ENCODE measurements at regions of chr10 and their contacts with region 1.

Region 1: GRCh38 chr10:22316285-22317120 is at the start of gene COMMD3:
- DNase-seq: peak; percentile 40
- ATAC-seq: peak; percentile 83
- H3K4me3 ChIP-seq: peak within 1 kb of the TSS; percentile 95
- H3K27ac ChIP-seq: peak within 1 kb of the TSS; percentile 89
- H3K4me1 ChIP-seq: peaks cover 18% of the 10 kb centered on the region
- H3K27me3 ChIP-seq: no peaks in the 10 kb centered on the region
- CTCF ChIP-seq: no peak
- EP300 ChIP-seq: no peak
- POLR2A ChIP-seq: peak; percentile 94
- RAD21 ChIP-seq: no peak
- polyA plus RNA-seq, gene COMMD3: 238 to 248 TPM

Region 2: GRCh38 chr10:21495752-21496342 is 820.7 kb before region 1 on chr10:
- CTCF ChIA-PET with region 1: no interaction called
- POLR2A ChIA-PET with region 1: no interaction called
- RAD21 ChIA-PET with region 1: no interaction called
- SMC1A ChIA-PET with region 1: no interaction called
- in situ Hi-C with region 1: no loop called
- intact Hi-C with region 1: loop called (anchors 10 kb)
- DNase-seq: peak; percentile 34
- ATAC-seq: peak; percentile 89
- H3K4me3 ChIP-seq: peak overlapping the region; percentile 65
- H3K27ac ChIP-seq: peak overlapping the region; percentile 35; the same call in 1 of the 2 replicates
- H3K4me1 ChIP-seq: peaks cover 20% of the 10 kb centered on the region
- H3K27me3 ChIP-seq: peaks cover 5 to 18% of the 10 kb centered on the region in 2 experiments
- CTCF ChIP-seq: peak; percentile 84 to 97 (median 89); a peak in 5 of 6 replicates
- EP300 ChIP-seq: 0 out of 4 replicates have a peak, but pooled peaks of 1 of the 2 experiments have one; percentile 34
- POLR2A ChIP-seq: peak; percentile 61
- RAD21 ChIP-seq: peak; percentile 85

Region 3: GRCh38 chr10:22003079-22003913 is 313.2 kb before region 1 on chr10 and contains the start of gene DNAJC1:
- CTCF ChIA-PET with region 1: interaction called, 4 read pairs
- POLR2A ChIA-PET with region 1: interaction called, 10 read pairs
- RAD21 ChIA-PET with region 1: no interaction called
- SMC1A ChIA-PET with region 1: interaction called, 3 read pairs
- in situ Hi-C with region 1: loop called (anchors 5 kb)
- intact Hi-C with region 1: loop called (anchors 5 kb)
- DNase-seq: peak; percentile 83
- ATAC-seq: peak; percentile 94
- H3K4me3 ChIP-seq: peak within 1 kb of the TSS; percentile 78
- H3K27ac ChIP-seq: peak within 1 kb of the TSS; percentile 91
- H3K4me1 ChIP-seq: peaks cover 16% of the 10 kb centered on the region
- H3K27me3 ChIP-seq: no peaks in the 10 kb centered on the region
- CTCF ChIP-seq: 0 out of 6 replicates have a peak, but pooled peaks of 1 of the 3 experiments have one; percentile 1
- EP300 ChIP-seq: no peak
- POLR2A ChIP-seq: peak; percentile 89
- RAD21 ChIP-seq: no peak
- polyA plus RNA-seq, gene DNAJC1: 2.5 to 6.4 TPM

Region 4: GRCh38 chr10:22251751-22252223 is 64.7 kb before region 1 on chr10:
- CTCF ChIA-PET with region 1: no interaction called
- POLR2A ChIA-PET with region 1: no interaction called
- RAD21 ChIA-PET with region 1: no interaction called
- SMC1A ChIA-PET with region 1: no interaction called
- in situ Hi-C with region 1: no loop called
- intact Hi-C with region 1: loop called (anchors 5 kb)
- DNase-seq: no peak
- ATAC-seq: peak; percentile 66
- H3K4me3 ChIP-seq: peak overlapping the region; percentile 79
- H3K27ac ChIP-seq: peak overlapping the region; percentile 90
- H3K4me1 ChIP-seq: peaks cover 7% of the 10 kb centered on the region
- H3K27me3 ChIP-seq: peaks cover 0 to 2% of the 10 kb centered on the region in 2 experiments; a peak in 3 of 4 replicates
- CTCF ChIP-seq: no peak
- EP300 ChIP-seq: no peak
- POLR2A ChIP-seq: peak; percentile 62; the same call in 1 of the 2 replicates
- RAD21 ChIP-seq: no peak

Region 5: DNA sequence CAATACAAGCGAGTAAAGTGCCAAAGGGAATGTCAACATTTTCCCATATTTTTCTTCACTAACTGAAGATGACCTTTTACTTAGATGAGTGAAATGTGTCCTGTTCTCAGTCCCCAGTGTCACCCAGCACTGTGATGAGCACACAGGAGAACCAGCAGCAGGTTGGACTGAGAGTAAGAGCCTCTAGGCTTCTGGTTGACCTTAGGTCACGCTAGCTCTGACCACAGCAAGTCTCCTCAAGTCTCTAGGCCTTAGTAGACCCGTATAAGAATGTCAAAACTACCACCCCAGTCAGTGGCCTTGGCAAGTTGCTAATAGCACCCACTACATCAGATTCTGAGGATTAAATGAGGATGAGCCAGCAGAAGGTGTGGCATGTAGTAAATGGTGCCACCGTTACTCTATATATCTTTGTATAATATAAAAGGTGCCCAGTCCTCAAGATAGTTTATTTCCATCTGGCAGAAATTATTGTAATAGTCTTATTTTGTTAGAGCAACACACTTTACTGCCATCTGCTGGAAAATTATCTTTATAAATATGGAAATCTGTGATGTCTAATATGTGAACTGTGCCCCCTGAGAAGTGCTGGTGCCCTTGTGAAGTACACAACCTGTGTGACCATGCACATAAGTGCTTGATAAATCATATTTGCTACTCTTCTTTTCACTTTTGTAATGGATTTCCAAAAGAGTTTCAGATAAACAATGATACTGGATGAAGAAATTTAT is 104.4 kb after region 1 on chr10:
- CTCF ChIA-PET with region 1: no interaction called
- POLR2A ChIA-PET with region 1: no interaction called
- RAD21 ChIA-PET with region 1: no interaction called
- SMC1A ChIA-PET with region 1: no interaction called
- in situ Hi-C with region 1: no loop called
- intact Hi-C with region 1: loop called (anchors 5 kb)
- DNase-seq: no peak
- ATAC-seq: peak; percentile 78
- H3K4me3 ChIP-seq: no peak overlapping the region
- H3K27ac ChIP-seq: no peak overlapping the region
- H3K4me1 ChIP-seq: no peaks in the 10 kb centered on the region
- H3K27me3 ChIP-seq: no peaks in the 10 kb centered on the region
- CTCF ChIP-seq: peak in 2 of 3 experiments; percentile 16 to 27; a peak in 3 of 6 replicates
- EP300 ChIP-seq: no peak
- POLR2A ChIP-seq: no peak
- RAD21 ChIP-seq: peak; percentile 52

Region 6: GRCh38 chr10:22714479-22715289 is 398.2 kb after region 1 on chr10 and contains the start of gene PIP4K2A:
- CTCF ChIA-PET with region 1: interaction called, 3 read pairs
- POLR2A ChIA-PET with region 1: no interaction called
- RAD21 ChIA-PET with region 1: no interaction called
- SMC1A ChIA-PET with region 1: no interaction called
- in situ Hi-C with region 1: no loop called
- intact Hi-C with region 1: loop called (anchors 10 kb)
- DNase-seq: no peak
- ATAC-seq: peak; percentile 63
- H3K4me3 ChIP-seq: peak within 1 kb of the TSS; percentile 75
- H3K27ac ChIP-seq: peak within 1 kb of the TSS; percentile 81
- H3K4me1 ChIP-seq: peaks cover 7% of the 10 kb centered on the region
- H3K27me3 ChIP-seq: no peaks in the 10 kb centered on the region
- CTCF ChIP-seq: no peak
- EP300 ChIP-seq: no peak
- POLR2A ChIP-seq: peak; percentile 84
- RAD21 ChIP-seq: no peak
- polyA plus RNA-seq, gene PIP4K2A: 54.3 to 103 TPM